CD8-positive, alpha-beta T cell (primary cell): ENCODE measurements at regions of chr1 and their contacts with region 1.

Region 1: DNA sequence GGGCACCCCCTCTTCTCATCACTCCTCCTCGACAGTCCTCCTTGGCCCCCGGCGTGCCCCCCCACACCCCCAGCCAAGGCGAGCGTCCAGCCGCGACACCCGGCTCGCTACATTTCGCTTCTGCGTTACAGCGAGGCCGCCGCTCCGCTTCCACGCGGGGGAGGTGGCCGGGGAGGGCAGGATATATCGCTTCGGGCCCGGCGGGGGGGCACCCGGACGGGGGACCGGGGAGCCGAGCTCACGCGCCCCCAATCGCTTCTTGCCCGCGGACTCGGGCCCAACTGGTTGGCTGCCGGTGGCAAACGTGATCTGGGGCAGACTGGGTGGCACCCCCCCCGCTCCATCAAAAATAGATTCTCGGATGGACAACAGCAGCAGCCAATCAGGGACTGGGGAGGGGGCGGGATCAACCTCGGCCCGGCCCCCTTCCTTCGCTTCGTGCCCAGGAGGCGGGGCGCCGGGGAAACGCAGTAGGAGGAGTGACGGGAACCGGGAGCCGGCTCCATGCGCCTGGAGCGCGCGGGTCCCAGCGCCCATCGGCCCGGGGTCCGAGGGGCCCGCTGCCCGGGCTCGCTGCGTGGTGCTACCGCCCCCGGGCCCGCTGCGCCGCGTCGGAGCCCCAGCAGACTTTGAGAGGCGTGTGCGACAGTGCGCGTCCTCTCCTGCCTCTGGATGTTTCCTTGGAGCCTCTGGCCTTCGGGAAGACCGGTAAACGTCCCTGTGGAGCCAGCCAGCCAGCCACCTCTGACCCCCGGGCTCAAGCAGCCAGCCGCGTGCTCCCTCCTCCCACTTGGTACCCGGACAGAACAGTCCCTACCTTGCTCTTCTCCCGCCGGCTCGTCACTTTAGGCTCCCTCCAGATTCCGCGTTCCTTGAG is at the start of gene SLC41A1:
- DNase-seq: peak; percentile 82 to 97 (median 92)
- ATAC-seq: peak; percentile 94
- H3K4me3 ChIP-seq: peak within 1 kb of the TSS; percentile 78 to 82
- H3K4me3 Mint-ChIP-seq: peak within 1 kb of the TSS; percentile 91
- H3K27ac ChIP-seq: peak within 1 kb of the TSS; percentile 43 to 64
- H3K27ac Mint-ChIP-seq: peak within 1 kb of the TSS; percentile 84
- H3K4me1 ChIP-seq: peaks cover 51% of the 10 kb centered on the region
- H3K4me1 Mint-ChIP-seq: peaks cover 58% of the 10 kb centered on the region
- H3K27me3 ChIP-seq: no peaks in the 10 kb centered on the region
- H3K27me3 Mint-ChIP-seq: no peaks in the 10 kb centered on the region
- CTCF ChIP-seq: no peak
- total RNA-seq, gene SLC41A1: 36.8 to 41.7 TPM

Region 2: GRCh38 chr1:205766038-205766437 is 47.1 kb before region 1 on chr1:
- CTCF ChIA-PET with region 1: no interaction called
- POLR2A ChIA-PET with region 1: no interaction called
- intact Hi-C with region 1: no loop called
- DNase-seq: no peak
- ATAC-seq: no peak
- H3K4me3 ChIP-seq: no peak overlapping the region
- H3K4me3 Mint-ChIP-seq: no peak overlapping the region
- H3K27ac ChIP-seq: no peak overlapping the region
- H3K27ac Mint-ChIP-seq: peak overlapping the region; percentile 75
- H3K4me1 ChIP-seq: no peaks in the 10 kb centered on the region
- H3K4me1 Mint-ChIP-seq: peaks cover 12% of the 10 kb centered on the region
- H3K27me3 ChIP-seq: no peaks in the 10 kb centered on the region
- H3K27me3 Mint-ChIP-seq: no peaks in the 10 kb centered on the region
- CTCF ChIP-seq: no peak

Region 3: DNA sequence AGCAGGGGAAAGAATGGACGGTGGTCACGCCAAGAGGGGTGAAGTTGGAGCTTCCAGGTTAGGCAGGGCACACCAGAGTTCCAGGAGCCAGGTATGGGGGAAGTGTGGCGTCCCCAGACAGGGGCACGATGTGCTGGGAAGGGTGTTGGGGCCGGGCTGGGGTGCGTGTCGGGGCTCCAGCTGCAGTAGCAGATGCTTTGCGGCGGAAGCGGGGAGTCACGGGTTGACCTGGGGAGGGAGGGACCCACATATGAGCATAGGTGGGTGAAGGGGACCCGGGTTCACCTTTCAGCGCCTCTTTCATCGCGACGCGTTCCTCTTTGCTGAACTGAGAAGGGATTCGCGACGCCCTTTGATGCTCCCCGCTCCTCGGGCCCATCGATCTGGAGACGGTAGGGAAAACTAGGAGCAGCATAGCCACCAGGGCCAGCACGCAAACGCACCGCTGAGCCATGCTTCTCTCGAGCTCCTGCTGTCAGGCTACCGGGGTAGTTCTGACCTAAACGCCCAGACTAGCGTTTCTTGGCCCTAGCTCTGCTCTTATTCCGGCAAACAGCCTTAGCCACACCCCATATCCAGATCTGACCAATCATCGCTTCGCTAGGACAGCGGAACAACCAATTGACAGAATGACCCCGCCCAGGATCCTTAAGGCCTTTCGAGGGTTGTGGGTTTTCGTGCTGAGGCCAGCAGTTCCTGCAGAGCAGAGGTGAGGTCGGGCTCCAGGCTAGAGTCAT is 36.7 kb after region 1 on chr1 and contains the start of gene PM20D1:
- CTCF ChIA-PET with region 1: no interaction called
- POLR2A ChIA-PET with region 1: interaction called, 3 read pairs
- intact Hi-C with region 1: loop called in 1 of 2 experiments (anchors 1 kb)
- DNase-seq: peak; percentile 55 to 95 (median 81)
- ATAC-seq: peak; percentile 97
- H3K4me3 ChIP-seq: peak within 1 kb of the TSS; percentile 47 to 57
- H3K4me3 Mint-ChIP-seq: peak within 1 kb of the TSS; percentile 90
- H3K27ac ChIP-seq: peak within 1 kb of the TSS; percentile 46 to 75
- H3K27ac Mint-ChIP-seq: peak within 1 kb of the TSS; percentile 95
- H3K4me1 ChIP-seq: peaks cover 4% of the 10 kb centered on the region
- H3K4me1 Mint-ChIP-seq: peaks cover 8% of the 10 kb centered on the region
- H3K27me3 ChIP-seq: no peaks in the 10 kb centered on the region
- H3K27me3 Mint-ChIP-seq: no peaks in the 10 kb centered on the region
- CTCF ChIP-seq: no peak
- total RNA-seq, gene PM20D1: 0.52 to 0.67 TPM

Region 4: DNA sequence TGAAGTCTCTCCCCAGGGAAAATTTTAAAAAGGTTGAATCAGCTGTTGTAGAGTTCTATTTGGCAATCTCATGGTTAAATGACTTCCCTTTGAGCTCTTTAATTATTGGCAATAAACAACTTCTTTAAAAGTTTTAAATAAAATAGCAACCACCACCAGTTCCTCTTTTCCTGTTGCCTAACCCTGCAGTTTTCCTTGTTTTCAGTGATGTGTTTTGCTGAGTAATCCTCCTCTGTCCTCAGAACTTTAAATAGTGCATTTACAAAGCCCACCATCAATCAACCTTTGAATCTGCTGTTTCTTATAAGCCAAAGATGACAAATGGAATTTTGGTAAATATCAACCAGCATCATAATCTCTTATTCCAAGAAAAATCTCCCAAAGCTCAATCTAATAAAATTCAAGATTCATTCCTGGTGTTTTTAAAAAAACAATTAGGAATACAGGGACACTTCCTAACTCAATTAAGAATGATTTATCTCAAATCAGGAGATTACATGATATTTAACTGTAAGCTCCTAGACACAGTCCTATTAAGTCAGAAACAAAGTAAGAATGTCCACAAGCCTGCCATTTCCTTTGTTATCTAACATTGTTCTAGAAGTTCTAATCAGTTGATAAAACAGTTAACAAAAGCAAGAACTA is 289.3 kb after region 1 on chr1:
- CTCF ChIA-PET with region 1: no interaction called
- POLR2A ChIA-PET with region 1: no interaction called
- intact Hi-C with region 1: no loop called
- DNase-seq: no peak
- ATAC-seq: no peak
- H3K4me3 ChIP-seq: no peak overlapping the region
- H3K4me3 Mint-ChIP-seq: no peak overlapping the region
- H3K27ac ChIP-seq: no peak overlapping the region
- H3K27ac Mint-ChIP-seq: no peak overlapping the region
- H3K4me1 ChIP-seq: no peaks in the 10 kb centered on the region
- H3K4me1 Mint-ChIP-seq: no peaks in the 10 kb centered on the region
- H3K27me3 ChIP-seq: no peaks in the 10 kb centered on the region
- H3K27me3 Mint-ChIP-seq: peaks cover 17% of the 10 kb centered on the region
- CTCF ChIP-seq: no peak

Region 5: DNA sequence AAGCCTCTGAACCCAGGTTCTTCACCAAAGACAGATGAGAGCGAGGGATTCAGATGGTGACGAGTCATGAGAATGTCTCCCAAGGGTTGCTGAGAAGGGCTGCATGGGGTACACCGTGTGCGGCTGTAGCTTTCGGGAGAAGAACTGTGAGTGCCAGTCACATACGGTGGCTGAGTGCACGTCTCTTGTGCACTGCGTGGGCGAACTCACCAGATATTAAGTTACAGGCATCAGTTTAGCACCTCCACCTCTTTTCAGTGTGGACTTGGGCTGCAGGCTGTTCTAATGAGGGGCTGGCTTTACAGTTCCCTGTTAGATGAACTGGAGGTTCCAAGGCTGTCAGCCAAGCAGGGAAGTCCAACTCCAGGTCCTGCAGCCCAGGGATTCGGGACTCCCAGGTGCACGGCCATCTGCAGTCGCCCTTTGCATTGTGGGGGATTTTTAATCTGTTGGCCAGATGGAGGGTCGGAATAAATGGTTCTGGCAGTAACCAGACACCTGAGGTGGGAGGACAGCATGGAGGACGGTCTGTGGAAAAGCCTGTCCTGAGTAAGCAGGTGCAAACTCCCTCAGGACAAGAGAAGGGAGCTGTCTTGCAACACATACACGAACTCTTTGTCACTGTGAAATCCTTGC is 330.5 kb after region 1 on chr1:
- CTCF ChIA-PET with region 1: no interaction called
- POLR2A ChIA-PET with region 1: no interaction called
- intact Hi-C with region 1: no loop called
- DNase-seq: no peak
- ATAC-seq: no peak
- H3K4me3 ChIP-seq: no peak overlapping the region
- H3K4me3 Mint-ChIP-seq: no peak overlapping the region
- H3K27ac ChIP-seq: no peak overlapping the region
- H3K27ac Mint-ChIP-seq: no peak overlapping the region
- H3K4me1 ChIP-seq: no peaks in the 10 kb centered on the region
- H3K4me1 Mint-ChIP-seq: peaks cover 10% of the 10 kb centered on the region
- H3K27me3 ChIP-seq: no peaks in the 10 kb centered on the region
- H3K27me3 Mint-ChIP-seq: peaks cover 12% of the 10 kb centered on the region
- CTCF ChIP-seq: no peak